ENCODE measurements at regions of chr19 and their contacts with region 1.

Region 1: DNA sequence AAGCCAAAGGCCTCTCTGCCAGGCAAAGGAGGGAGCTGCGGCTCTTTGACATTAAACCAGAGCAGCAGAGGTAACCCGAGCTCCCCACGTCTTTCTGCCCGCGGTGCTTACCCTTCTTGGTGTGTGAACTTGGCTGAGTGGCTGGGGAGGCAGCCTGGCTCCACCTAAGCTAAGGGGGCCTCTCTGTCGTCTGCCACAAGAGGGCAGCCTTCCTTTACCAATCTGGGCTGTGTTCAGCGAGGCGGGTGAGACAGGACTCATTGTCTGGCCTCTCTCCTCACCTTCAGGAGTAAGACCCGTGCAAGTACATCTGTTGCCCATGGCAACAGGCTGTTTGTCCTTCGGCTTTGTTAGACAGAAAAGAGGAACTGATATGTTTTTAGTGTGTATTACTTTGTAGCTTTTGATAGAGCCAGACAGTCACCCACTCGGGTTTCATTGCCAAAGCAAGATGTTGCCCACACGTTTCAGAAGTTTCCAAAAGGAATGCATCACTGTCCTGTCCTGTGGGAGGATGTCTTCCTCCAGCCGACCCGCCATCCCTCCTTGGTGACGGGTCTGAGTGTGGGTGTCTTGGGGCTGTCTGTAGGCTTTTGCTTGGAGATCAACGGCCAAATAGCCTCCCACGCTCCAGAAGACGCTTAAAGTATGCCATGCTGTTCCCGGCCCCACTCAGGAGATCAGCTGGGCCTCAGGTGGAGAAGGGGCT is 4.6 kb downstream of the POP4 start:
- DNase-seq: peak; percentile 76
- H3K4me3 Mint-ChIP-seq: peak overlapping the region; percentile 19
- H3K27ac Mint-ChIP-seq: peak overlapping the region; percentile 6
- H3K4me1 Mint-ChIP-seq: peaks cover 19% of the 10 kb centered on the region
- H3K27me3 Mint-ChIP-seq: no peaks in the 10 kb centered on the region

Region 2: DNA sequence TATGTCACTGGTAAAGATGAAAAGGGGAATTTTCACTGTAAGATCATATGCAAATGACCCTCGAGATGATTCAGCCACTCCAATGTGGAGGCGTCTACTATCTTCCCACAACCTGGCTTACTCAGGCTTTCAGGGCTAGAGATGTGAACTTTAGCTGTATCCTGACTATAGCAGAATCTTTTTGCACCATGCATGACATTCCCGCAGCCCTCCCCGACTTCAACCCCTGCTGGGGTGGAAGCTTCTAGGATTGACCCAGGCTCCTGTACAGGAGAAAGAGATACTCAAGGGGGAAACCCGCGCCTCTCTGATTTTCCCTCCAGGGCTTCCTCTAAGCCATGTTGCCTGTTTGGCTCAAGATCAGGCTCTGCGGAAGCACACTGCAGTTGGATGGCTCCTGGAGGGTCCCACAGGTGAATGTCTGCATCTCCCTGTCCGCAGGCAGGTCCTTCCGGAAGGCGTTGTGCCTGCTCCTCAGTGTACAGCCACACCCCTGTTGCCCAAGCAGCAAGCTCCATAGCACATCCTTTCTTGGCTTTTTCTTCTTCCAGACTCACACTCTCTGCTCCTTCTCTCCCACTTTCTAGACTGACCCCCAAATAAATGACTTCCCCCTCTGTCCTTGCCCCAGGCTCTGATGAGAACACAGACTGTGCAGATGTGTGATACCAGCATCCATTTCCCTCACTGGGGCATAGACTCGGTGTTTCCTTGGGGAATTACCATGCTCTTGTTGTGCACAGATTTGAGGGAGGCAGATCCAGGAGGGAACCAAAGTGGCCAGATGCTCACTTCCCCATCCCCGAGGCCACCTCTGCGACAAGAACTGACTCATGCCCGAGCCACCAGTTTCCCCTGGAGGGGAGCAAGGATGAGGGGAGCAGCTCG is 33.7 kb before region 1 on chr19:
- intact Hi-C with region 1: loop called (anchors 1 kb)
- DNase-seq: no peak
- H3K4me3 Mint-ChIP-seq: no peak overlapping the region
- H3K27ac Mint-ChIP-seq: no peak overlapping the region
- H3K4me1 Mint-ChIP-seq: peaks cover 29% of the 10 kb centered on the region
- H3K27me3 Mint-ChIP-seq: peaks cover 21% of the 10 kb centered on the region

Region 3: GRCh38 chr19:29622138-29623070 is 11.7 kb after region 1 on chr19:
- intact Hi-C with region 1: no loop called
- DNase-seq: no peak
- H3K4me3 Mint-ChIP-seq: peak overlapping the region; percentile 38
- H3K27ac Mint-ChIP-seq: peak overlapping the region; percentile 31
- H3K4me1 Mint-ChIP-seq: peaks cover 43% of the 10 kb centered on the region
- H3K27me3 Mint-ChIP-seq: peaks cover 2% of the 10 kb centered on the region

Region 4: GRCh38 chr19:29671393-29672160 is 60.9 kb after region 1 on chr19:
- intact Hi-C with region 1: loop called (anchors 1 kb)
- DNase-seq: peak; percentile 75
- H3K4me3 Mint-ChIP-seq: peak overlapping the region; percentile 76
- H3K27ac Mint-ChIP-seq: peak overlapping the region; percentile 92
- H3K4me1 Mint-ChIP-seq: peaks cover 75% of the 10 kb centered on the region
- H3K27me3 Mint-ChIP-seq: no peaks in the 10 kb centered on the region

Region 5: GRCh38 chr19:29714953-29715700 is 104.4 kb after region 1 on chr19 and contains the start of gene C19orf12:
- intact Hi-C with region 1: loop called (anchors 1 kb)
- DNase-seq: peak; percentile 66
- H3K4me3 Mint-ChIP-seq: peak within 1 kb of the TSS; percentile 94
- H3K27ac Mint-ChIP-seq: peak within 1 kb of the TSS; percentile 98
- H3K4me1 Mint-ChIP-seq: peaks cover 57% of the 10 kb centered on the region
- H3K27me3 Mint-ChIP-seq: no peaks in the 10 kb centered on the region
- total RNA-seq, gene C19orf12: 47.9 and 50.2 TPM in 2 replicates

Region 6: DNA sequence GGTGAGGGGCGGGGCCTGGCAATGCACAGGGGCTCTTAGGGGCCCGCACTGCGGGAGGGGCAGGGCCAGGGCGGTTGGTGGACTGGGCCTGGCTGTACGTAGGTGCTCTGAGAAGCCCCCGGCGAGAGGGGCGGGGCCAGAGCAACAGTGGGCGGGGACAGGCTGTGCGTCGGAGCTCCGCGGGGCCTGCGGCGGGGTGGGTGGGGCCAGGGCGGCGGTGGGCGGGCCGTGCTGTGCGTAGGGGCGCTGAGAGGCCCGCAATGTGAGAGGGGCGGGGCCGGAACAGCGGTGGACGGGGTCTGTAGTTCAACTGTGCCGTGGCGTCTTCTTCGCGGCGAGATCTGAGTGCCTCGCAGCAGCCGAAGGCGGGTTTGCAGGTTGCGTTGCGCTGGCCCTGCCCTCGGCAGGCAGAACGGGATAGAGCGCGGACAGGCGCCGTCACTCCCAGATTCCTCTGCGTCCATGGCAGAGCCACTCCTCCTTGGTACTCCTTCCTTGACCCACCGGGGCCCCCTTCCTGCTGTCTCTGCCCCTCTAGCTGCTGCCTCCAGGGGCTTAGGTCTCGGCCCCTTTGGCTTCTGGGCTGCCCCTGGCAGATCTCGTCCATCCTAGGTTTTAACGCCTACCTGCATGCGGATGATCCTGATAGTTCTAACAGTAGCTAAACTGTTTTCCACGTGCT is 234.3 kb after region 1 on chr19:
- intact Hi-C with region 1: loop called (anchors 2 kb)
- DNase-seq: peak; percentile 93
- H3K4me3 Mint-ChIP-seq: peak overlapping the region; percentile 84
- H3K27ac Mint-ChIP-seq: peak overlapping the region; percentile 80
- H3K4me1 Mint-ChIP-seq: peaks cover 30% of the 10 kb centered on the region
- H3K27me3 Mint-ChIP-seq: peaks cover 4% of the 10 kb centered on the region

Region 7: GRCh38 chr19:29941828-29942403 is 331.2 kb after region 1 on chr19 and contains the start of gene URI1:
- intact Hi-C with region 1: loop called (anchors 2 kb)
- DNase-seq: peak; percentile 93
- H3K4me3 Mint-ChIP-seq: peak within 1 kb of the TSS; percentile 97
- H3K27ac Mint-ChIP-seq: peak within 1 kb of the TSS; percentile 96
- H3K4me1 Mint-ChIP-seq: peaks cover 48% of the 10 kb centered on the region
- H3K27me3 Mint-ChIP-seq: peaks cover 2% of the 10 kb centered on the region
- total RNA-seq, gene URI1: 62.9 and 67.6 TPM in 2 replicates

Measured in activated T-helper 1 cell treated with anti-CD3 and anti-CD28 coated beads, Interleukin-12 subunit alpha, Interleukin-12 subunit beta, Interleukin-2, Interleukin-4 antibody, amounts not matched to agents 30 ng/mL and 10 ng/mL and 1 ng/mL, durations not matched to agents 14 hours and 24 hours and 36 hours (primary cell).